Endothelial cell of umbilical vein (primary cell): ENCODE measurements at regions of chr11 and their contacts with region 1.

Region 1: GRCh38 chr11:22472306-22472705 is 134.1 kb downstream of the SLC17A6 start:
- DNase-seq: peak; percentile 15
- H3K4me3 ChIP-seq: no peak overlapping the region
- H3K27ac ChIP-seq: no peak overlapping the region
- H3K4me1 ChIP-seq: no peaks in the 10 kb centered on the region
- H3K27me3 ChIP-seq: peaks cover 0 to 3% of the 10 kb centered on the region in 2 experiments
- CTCF ChIP-seq: peak in 1 of 2 donors; percentile 15
- POLR2A ChIP-seq: no peak

Region 2: GRCh38 chr11:21975242-21975641 is 497.1 kb before region 1 on chr11:
- CTCF ChIA-PET with region 1: no interaction called
- POLR2A ChIA-PET with region 1: no interaction called
- dilution Hi-C with region 1: no loop called
- intact Hi-C with region 1: no loop called
- DNase-seq: no peak
- H3K4me3 ChIP-seq: no peak overlapping the region
- H3K27ac ChIP-seq: no peak overlapping the region
- H3K4me1 ChIP-seq: no peaks in the 10 kb centered on the region
- H3K27me3 ChIP-seq: no peaks in the 10 kb centered on the region
- CTCF ChIP-seq: no peak
- POLR2A ChIP-seq: no peak

Region 3: DNA sequence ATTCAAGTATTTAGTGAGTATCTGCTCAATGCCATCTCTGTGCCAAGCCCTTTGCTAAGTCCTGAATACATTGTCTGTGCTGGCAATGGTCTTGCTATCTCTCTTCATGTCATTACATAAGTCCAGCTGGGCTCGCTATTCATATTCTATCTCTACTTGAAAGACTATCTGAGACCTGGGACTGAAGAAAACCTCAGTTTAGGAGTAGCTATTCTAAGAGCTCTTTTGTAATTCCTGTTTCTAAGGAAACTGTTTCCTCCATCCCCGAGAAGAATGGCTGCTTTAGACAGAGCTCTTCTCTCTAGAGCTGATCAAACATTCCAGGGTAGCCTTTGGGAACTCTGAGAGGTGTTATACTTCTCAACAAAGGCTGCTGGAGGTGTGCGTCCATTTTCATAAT is 101.1 kb before region 1 on chr11:
- CTCF ChIA-PET with region 1: no interaction called
- POLR2A ChIA-PET with region 1: no interaction called
- dilution Hi-C with region 1: no loop called
- intact Hi-C with region 1: loop called (anchors 10 kb)
- DNase-seq: no peak
- H3K4me3 ChIP-seq: no peak overlapping the region
- H3K27ac ChIP-seq: no peak overlapping the region
- H3K4me1 ChIP-seq: no peaks in the 10 kb centered on the region
- H3K27me3 ChIP-seq: peaks cover 0 to 2% of the 10 kb centered on the region in 2 experiments
- CTCF ChIP-seq: no peak
- POLR2A ChIP-seq: no peak